Left ventricle myocardium superior (tissue), 1 donor: ENCODE measurements at regions of chr20 and their contacts with region 1.

Region 1: GRCh38 chr20:6925744-6926278 is 158.3 kb downstream of the BMP2 start:
- DNase-seq: no peak
- ATAC-seq: no peak

Region 2: DNA sequence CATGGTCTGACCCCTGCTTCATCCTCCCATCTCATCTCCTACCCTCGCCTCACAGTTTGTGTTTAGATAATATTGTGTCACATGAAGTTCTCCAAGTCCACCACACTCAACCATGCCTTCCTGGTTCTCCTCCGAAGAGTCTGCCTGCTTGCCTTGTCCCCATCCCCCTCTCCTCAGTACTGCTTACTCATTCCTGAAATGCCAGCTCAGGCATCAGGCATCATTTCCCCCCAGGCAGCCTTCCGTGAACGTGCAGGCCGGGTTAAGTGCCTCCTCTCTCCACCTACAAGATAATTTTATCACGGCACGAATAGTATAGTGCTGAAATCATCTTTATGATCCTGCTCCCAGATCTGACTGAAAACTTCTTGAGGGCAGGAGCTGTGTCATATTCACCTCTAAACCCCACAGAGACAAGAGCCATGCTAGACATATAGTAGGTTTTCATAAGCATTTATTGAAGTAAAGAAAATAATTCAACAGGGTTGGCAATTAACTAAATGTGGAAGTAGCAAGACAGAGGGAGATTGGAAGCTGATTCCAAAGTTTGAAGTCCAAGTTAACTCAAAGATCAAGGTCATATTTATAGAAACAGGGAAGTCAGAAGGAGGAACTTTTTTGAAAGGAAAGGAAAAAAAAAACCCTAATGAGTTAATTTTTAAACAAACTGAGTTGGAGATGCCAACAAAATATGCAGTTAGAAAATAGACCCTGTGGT is 207.0 kb before region 1 on chr20:
- intact Hi-C with region 1: no loop called
- DNase-seq: no peak
- ATAC-seq: no peak

Region 3: DNA sequence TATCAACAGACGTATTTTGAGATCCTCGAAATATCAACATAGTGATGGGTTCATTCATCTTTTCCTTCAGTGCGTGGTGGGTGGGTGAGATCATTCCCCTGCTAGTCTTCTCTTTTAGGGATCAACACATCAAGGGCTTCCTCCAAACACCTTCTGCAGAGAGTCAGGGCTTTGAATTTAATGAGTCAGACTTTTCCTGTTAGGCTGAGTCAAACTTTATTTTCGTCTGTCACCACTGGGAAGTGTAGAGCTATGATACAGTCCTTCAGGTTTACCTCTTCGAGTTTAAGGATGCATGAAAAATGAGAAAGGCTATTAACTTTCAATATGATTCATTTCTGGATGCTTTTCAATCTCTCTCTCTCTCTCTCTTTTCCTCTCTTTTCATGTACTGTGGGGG is 30.8 kb after region 1 on chr20:
- intact Hi-C with region 1: loop called (anchors 1 kb)
- DNase-seq: no peak
- ATAC-seq: no peak